CD8-positive, alpha-beta T cell (primary cell): ENCODE measurements at regions of chr3 and their contacts with region 1.

Region 1: DNA sequence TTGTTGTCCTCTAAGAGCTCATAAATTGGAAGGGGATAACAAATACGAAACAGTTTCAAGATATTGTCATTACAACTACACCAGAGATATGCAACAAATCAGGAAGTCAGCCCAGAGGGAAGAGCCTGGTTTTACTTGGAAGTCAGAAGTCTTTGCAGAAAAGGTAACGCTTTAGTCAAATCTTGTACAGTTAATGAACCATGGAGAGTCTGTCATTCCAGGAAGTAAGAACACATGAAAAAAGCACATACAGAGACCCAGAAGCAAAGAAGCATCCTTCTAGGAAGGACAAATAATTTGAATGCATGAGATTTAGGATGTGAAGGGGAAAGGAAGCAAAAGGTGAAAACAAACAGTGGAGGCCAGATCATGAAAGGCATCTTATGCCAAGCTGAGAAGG is 19.6 kb downstream of the DYNC1LI1 start:
- DNase-seq: no peak
- ATAC-seq: no peak
- H3K4me3 ChIP-seq: no peak overlapping the region
- H3K4me3 Mint-ChIP-seq: no peak overlapping the region
- H3K27ac ChIP-seq: no peak overlapping the region
- H3K27ac Mint-ChIP-seq: no peak overlapping the region
- H3K4me1 ChIP-seq: peaks cover 4% of the 10 kb centered on the region
- H3K4me1 Mint-ChIP-seq: peaks cover 54% of the 10 kb centered on the region
- H3K27me3 ChIP-seq: no peaks in the 10 kb centered on the region
- H3K27me3 Mint-ChIP-seq: no peaks in the 10 kb centered on the region
- CTCF ChIP-seq: no peak

Region 2: GRCh38 chr3:32584660-32585059 is 33.6 kb after region 1 on chr3:
- CTCF ChIA-PET with region 1: no interaction called
- POLR2A ChIA-PET with region 1: no interaction called
- intact Hi-C with region 1: loop called in 1 of 2 experiments (anchors 5 kb)
- DNase-seq: no peak
- ATAC-seq: no peak
- H3K4me3 ChIP-seq: no peak overlapping the region
- H3K4me3 Mint-ChIP-seq: no peak overlapping the region
- H3K27ac ChIP-seq: no peak overlapping the region
- H3K27ac Mint-ChIP-seq: no peak overlapping the region
- H3K4me1 ChIP-seq: no peaks in the 10 kb centered on the region
- H3K4me1 Mint-ChIP-seq: no peaks in the 10 kb centered on the region
- H3K27me3 ChIP-seq: no peaks in the 10 kb centered on the region
- H3K27me3 Mint-ChIP-seq: peaks cover 2% of the 10 kb centered on the region
- CTCF ChIP-seq: no peak